T-cell (primary cell): ENCODE measurements at regions of chr3 and their contacts with region 1.

Region 1: DNA sequence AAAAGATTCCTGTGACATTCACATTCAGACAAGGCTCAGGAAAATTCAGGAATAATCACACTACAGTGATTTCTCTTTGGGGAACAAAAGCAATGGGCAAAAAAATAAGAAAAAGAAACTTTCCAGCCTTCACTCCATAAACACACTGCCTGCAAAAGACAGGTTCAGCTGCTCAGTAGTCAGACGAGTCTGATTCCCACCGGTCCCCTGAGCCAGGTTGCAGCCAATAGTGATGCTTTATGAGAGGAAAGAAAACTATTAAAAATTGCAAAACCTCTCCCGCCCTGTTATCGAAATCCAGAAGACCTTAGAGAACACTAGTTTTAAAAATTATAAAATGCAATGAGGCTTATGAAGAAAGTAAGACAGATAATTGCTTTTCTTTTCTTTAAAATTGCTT is 8.5 kb downstream of the PLCH1 start:
- DNase-seq: no peak
- ATAC-seq: no peak
- H3K4me3 ChIP-seq: no peak overlapping the region
- H3K4me3 Mint-ChIP-seq: no peak overlapping the region
- H3K27ac ChIP-seq: no peak overlapping the region
- H3K27ac Mint-ChIP-seq: no peak overlapping the region
- H3K4me1 ChIP-seq: no peaks in the 10 kb centered on the region
- H3K4me1 Mint-ChIP-seq: no peaks in the 10 kb centered on the region
- H3K27me3 ChIP-seq: peaks cover 0 to 12% of the 10 kb centered on the region in 2 experiments
- H3K27me3 Mint-ChIP-seq: peaks cover 30 to 40% of the 10 kb centered on the region in 2 donors

Region 2: DNA sequence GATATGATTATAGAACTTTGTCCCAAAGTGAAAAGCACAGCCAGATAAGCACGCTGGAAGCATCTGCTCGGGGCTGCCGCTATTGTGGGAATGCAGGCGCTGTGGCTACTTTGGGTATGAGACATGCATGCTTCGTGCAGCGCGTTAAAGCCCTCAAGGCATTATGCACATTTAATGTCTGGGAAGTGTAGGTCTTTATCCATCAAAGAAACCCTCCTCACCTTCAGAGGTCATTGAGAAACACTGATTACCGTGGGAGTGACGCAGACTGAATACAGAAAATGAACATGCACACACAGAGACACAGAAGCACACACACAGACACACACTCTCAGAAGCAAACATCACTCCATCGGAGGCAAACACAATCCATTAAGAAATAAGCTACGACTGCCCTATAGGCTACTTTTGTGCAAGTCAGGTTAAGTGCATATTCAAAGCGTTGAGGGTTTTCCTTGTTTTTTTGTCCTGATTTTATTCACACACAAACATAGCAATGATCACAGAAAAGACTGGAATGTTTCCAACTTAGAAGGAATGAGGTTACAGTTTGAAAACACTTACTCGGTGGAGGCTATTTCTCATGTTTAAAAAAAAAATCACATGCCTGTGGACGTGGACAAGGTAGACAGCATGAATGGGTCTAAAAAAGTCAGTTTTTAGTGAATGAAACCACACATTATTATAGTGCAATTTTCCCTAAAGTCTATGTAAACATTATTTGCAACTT is 60.0 kb before region 1 on chr3:
- CTCF ChIA-PET with region 1: no interaction called
- POLR2A ChIA-PET with region 1: no interaction called
- DNase-seq: no peak
- ATAC-seq: no peak
- H3K4me3 ChIP-seq: no peak overlapping the region
- H3K4me3 Mint-ChIP-seq: no peak overlapping the region
- H3K27ac ChIP-seq: no peak overlapping the region
- H3K27ac Mint-ChIP-seq: no peak overlapping the region
- H3K4me1 ChIP-seq: no peaks in the 10 kb centered on the region
- H3K4me1 Mint-ChIP-seq: no peaks in the 10 kb centered on the region
- H3K27me3 ChIP-seq: no peaks in the 10 kb centered on the region
- H3K27me3 Mint-ChIP-seq: peaks cover 5 to 6% of the 10 kb centered on the region in 2 donors

Region 3: DNA sequence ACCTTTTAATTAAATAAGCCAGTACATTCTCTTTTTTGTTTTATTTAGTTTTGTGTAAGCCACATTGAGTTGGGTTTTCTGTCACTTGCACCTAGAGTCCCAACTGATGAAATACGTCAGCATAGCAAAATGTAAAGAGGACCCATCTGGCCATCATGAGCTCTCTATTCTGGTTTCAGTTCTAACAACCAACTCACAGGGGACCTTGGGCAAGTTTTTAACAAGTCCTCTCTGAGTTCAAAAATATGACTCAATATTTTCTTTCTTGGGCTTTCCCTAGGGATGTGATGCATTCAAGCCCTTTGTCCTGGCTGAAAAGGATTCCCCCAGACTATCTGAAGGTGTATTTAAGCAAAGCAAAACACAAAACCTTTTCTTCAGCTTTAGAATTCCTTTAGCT is 24.4 kb before region 1 on chr3:
- CTCF ChIA-PET with region 1: no interaction called
- POLR2A ChIA-PET with region 1: interaction called in 1 of 2 experiments, 10 read pairs
- DNase-seq: no peak
- ATAC-seq: no peak
- H3K4me3 ChIP-seq: no peak overlapping the region
- H3K4me3 Mint-ChIP-seq: no peak overlapping the region
- H3K27ac ChIP-seq: no peak overlapping the region
- H3K27ac Mint-ChIP-seq: no peak overlapping the region
- H3K4me1 ChIP-seq: no peaks in the 10 kb centered on the region
- H3K4me1 Mint-ChIP-seq: no peaks in the 10 kb centered on the region
- H3K27me3 ChIP-seq: no peaks in the 10 kb centered on the region
- H3K27me3 Mint-ChIP-seq: no peaks in the 10 kb centered on the region